ENCODE measurements at regions of chr22 and their contacts with region 1.

Region 1: GRCh38 chr22:31036671-31037550 is 44.2 kb upstream of the SMTN start:
- DNase-seq: peak; percentile 42 to 85
- H3K4me3 ChIP-seq: peak overlapping the region; percentile 25 to 30
- H3K27ac ChIP-seq: peak overlapping the region; percentile 79 to 80
- H3K4me1 ChIP-seq: peaks cover 0 to 57% (median 42%) of the 10 kb centered on the region in 4 donors
- H3K27me3 ChIP-seq: no peaks in the 10 kb centered on the region
- CTCF ChIP-seq: no peak

Region 2: GRCh38 chr22:30968924-30969539 is 67.9 kb before region 1 on chr22 and contains the start of gene TUG1:
- intact Hi-C with region 1: loop called (anchors 5 kb)
- DNase-seq: peak; percentile 98 to 99
- H3K4me3 ChIP-seq: peak within 1 kb of the TSS; percentile 83 to 95
- H3K27ac ChIP-seq: peak within 1 kb of the TSS; percentile 95 to 96
- H3K4me1 ChIP-seq: peaks cover 0 to 61% (median 19%) of the 10 kb centered on the region in 4 donors
- H3K27me3 ChIP-seq: no peaks in the 10 kb centered on the region
- CTCF ChIP-seq: peak in 1 of 2 experiments; percentile 3

Region 3: DNA sequence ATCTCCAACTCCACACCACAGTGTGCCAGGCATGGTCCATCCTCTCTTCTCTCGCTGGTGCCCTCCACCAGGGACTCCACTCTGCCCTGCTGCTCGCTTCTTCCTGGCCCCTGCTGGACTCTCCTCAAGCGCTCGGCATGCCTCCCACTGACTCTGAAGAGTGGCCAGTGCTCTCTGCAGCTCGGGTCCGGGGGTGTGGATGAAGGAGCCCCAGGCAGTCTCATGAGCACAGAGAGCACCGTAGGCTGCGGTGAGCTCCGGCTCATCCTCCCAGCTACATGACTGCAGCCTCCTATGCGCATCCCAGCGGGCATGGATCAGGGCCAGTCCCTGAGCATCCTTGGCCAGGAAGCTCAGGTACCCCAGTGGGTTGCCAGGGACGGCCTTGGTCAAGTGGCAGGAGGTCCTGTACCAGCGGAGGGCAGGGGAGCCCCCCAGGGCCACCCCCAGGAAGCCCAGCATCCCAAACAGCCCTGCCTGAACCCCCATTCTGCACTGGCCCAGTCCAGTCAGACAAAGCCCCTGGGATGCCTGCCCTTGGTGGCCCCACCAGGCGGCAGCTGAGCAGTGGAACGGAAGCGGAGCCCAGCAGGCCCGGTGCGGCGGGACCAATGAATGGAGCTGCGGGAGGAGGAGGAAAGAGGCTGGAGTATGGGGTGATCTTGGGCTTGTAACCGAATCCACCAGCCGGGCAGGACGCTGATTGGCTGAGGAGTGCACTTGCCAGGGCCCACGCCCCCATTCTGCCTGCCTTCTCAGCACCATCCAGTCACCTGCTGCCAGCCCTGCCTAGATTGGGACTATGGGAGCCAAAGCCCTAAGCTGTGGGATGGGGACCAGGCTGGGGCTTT is 103.2 kb after region 1 on chr22 and contains the start of gene PLA2G3:
- intact Hi-C with region 1: no loop called
- DNase-seq: no peak
- H3K4me3 ChIP-seq: no peak within 1 kb of the TSS
- H3K27ac ChIP-seq: no peak within 1 kb of the TSS
- H3K4me1 ChIP-seq: peaks cover 0 to 25% (median 12%) of the 10 kb centered on the region in 4 donors
- H3K27me3 ChIP-seq: peaks cover 0 to 9% of the 10 kb centered on the region in 2 donors
- CTCF ChIP-seq: no peak

Region 4: GRCh38 chr22:31206906-31207678 is 170.2 kb after region 1 on chr22:
- intact Hi-C with region 1: no loop called
- DNase-seq: no peak
- H3K4me3 ChIP-seq: no peak overlapping the region
- H3K27ac ChIP-seq: no peak overlapping the region
- H3K4me1 ChIP-seq: peaks cover 0 to 8% (median 7%) of the 10 kb centered on the region in 4 donors
- H3K27me3 ChIP-seq: no peaks in the 10 kb centered on the region
- CTCF ChIP-seq: no peak

Region 5: GRCh38 chr22:31223786-31224191 is 186.9 kb after region 1 on chr22:
- intact Hi-C with region 1: no loop called
- DNase-seq: no peak
- H3K4me3 ChIP-seq: no peak overlapping the region
- H3K27ac ChIP-seq: no peak overlapping the region
- H3K4me1 ChIP-seq: peaks cover 0 to 19% (median 1%) of the 10 kb centered on the region in 4 donors
- H3K27me3 ChIP-seq: no peaks in the 10 kb centered on the region
- CTCF ChIP-seq: no peak

Measured in tibial artery (tissue), 4 donors.